Right ventricle myocardium inferior (tissue), 1 donor: ENCODE measurements at regions of chr13 and their contacts with region 1.

Region 1: GRCh38 chr13:26985285-26985878 is 186.2 kb downstream of the USP12 start:
- DNase-seq: no peak
- ATAC-seq: peak; percentile 65

Region 2: DNA sequence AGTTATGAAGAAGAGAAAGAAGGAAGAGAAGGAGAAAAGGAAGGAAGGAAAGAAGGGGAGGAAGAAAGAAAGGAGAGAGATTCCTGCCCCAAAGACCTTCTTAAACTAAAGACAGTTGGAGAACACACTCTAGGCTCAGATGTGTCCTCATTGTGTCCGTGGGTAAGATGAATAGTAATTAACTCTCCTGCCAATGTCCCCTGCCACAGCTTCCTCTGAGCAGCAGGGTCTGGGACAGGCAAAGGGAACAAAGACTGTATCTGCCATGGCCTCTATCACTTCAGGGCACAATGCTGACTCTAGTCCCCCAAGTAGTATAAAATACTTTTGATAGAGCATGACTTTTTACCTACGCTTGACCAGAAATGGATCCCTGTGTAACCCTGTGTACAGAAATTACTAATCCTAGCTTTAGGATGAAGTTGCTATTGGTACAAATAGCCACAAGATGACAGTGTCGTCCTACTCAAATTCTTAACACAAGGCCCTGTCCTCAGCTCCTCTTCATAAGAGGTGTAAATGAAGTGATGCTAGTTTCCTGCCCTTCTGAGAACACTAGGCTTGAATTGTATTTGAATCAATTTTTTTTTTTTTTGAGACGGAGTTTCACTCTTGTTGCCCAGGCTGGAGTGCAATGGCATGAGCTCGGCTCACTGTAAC is 38.6 kb before region 1 on chr13:
- intact Hi-C with region 1: loop called (anchors 1 kb)
- DNase-seq: no peak
- ATAC-seq: peak; percentile 80

Region 3: DNA sequence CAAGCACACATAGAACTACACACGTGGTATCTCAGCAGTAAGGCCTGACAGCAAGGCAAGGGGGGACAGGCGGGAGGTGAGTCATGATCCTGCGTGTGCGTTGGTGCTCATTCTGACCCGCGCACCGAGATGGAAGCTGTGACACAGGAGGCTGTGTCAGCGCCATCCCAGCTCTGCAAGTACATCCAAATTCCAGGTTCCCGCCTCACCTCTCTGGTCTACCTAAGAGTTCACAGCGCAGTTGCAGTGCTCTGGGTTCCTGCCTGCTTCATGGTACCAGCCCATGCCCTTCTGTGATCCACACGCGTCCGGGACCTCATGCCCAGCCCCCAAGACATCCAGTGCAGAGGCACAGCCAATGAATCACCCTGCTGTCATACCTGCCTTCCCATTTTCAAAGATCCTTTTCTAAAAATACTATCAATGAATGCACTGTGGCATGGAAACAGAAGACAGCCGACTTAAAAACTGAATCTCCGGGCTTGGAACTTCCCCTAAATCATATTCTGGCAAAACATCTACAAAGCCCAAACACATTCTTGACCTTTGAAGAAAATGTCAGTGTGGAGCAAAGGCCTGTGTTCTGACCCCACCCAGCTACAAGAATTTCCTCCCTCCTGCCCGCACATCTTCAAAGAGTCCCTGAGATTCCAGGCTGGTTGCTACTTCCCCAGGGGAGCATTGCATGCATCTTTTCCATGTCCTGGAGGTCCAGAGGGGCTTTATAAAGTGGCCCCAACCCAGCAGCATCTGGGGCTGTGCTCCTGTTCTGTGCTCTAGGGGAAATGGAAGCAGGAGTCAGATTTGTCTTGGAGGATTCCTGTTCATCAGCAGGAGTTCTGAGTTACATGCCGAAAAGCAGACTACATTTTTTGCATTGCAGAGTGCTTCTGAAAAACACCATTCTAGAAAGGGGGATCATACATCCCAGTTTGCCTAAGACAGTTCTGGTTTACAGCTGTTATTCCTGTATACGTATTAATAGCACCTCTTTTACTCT is 50.9 kb after region 1 on chr13:
- intact Hi-C with region 1: no loop called
- DNase-seq: no peak
- ATAC-seq: no peak

Region 4: DNA sequence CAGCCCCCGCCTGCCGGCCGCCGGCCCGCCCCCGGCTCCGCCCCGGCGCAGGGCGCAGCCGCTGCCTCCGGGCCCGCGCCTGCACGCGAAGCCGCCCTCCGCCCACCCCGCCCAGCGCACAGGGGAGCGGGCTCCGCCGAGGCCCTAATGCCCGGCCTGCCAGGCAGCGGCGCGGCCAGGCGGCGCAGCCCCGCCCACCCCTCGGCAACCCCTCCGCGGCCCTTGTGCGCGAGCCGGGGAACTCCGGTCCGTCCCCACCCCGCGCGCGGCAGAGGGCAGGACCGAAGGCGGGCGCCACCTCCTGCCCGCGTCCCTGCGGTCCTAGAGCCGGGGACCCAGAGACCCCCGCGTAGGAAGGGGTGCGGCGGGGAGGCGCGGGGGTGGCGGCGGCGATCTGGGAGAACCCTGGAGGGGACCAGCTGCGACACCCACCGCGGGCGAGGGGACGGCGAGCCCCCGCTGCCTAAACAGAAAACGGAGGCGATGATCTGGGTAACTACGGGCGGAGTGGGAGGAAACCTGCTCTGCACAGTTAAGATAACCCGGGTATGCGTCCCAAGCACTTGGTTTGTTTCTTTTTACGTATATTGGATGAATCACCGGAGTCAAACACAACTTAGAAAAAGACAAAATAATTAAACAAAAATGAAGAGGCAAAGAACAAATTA is 186.6 kb after region 1 on chr13:
- intact Hi-C with region 1: loop called (anchors 2 kb)
- DNase-seq: peak; percentile 96
- ATAC-seq: peak; percentile 99

Region 5: GRCh38 chr13:27203854-27204253 is 218.5 kb after region 1 on chr13:
- intact Hi-C with region 1: loop called (anchors 5 kb)
- DNase-seq: no peak
- ATAC-seq: peak; percentile 54

Region 6: DNA sequence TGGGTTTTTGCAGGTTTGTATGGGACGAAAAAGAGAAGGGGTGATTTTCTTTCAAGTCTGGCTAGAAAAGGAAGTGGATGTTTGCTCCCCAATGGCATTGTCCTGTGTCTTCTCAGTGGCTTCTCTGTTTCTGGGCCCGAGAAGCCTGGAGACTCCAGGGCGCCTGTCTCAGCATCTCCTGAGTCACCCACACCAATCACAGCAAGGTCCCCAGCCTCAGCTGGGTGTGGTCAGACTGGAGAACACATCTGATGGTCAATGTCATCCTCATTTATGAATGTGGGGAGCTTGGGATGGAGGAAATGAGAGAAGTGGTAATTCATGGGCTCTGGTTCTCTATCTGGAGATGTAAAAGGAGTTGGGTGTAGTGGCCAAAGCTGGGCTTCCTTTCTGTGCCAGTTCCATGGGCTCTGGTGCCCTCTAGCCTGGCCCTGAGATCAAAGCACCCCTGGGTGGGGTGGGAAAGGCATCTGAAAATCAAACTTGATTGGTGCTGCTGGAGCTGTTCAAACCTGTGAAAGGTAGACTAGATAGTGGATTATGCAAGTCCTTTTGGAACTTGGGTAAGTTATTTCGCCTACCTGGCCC is 298.6 kb after region 1 on chr13:
- intact Hi-C with region 1: loop called (anchors 2 kb)
- DNase-seq: no peak
- ATAC-seq: peak; percentile 72

Region 7: GRCh38 chr13:27362064-27362883 is 376.9 kb after region 1 on chr13:
- intact Hi-C with region 1: loop called (anchors 1 kb)
- DNase-seq: peak; percentile 94
- ATAC-seq: peak; percentile 94

Region 8: GRCh38 chr13:27980280-27980998 is 995.1 kb after region 1 on chr13:
- intact Hi-C with region 1: loop called (anchors 10 kb)
- DNase-seq: no peak
- ATAC-seq: no peak